ENCODE measurements at regions of chr22 and their contacts with region 1.

Region 1: DNA sequence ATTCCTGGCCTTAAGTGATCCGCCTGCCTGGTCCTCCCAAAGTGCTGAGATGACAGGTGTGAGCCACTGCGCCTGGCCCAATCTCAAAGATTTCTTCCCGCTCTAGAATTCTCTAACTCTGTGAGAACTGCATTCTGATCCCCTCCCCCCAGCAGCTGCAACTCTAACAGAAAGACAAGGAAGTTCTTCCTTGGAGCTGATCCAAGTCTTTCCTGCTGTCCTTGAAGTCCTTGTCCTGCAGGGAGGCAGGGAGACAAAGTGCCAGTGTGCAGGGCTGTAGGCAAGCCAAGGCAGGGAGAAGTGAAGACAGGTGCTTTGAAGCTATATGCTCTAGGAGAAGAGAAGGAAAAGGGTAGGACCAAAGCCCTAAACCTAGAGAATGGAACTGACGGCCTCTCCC is 9.5 kb upstream of the GGA1 start:
- DNase-seq: no peak
- H3K4me3 ChIP-seq: no peak overlapping the region
- H3K27ac ChIP-seq: no peak overlapping the region
- H3K4me1 ChIP-seq: peaks cover 0 to 29% (median 5%) of the 10 kb centered on the region in 3 donors
- H3K27me3 ChIP-seq: peaks cover 0 to 3% (median 0%) of the 10 kb centered on the region in 4 donors
- CTCF ChIP-seq: no peak
- POLR2A ChIP-seq: no peak

Region 2: DNA sequence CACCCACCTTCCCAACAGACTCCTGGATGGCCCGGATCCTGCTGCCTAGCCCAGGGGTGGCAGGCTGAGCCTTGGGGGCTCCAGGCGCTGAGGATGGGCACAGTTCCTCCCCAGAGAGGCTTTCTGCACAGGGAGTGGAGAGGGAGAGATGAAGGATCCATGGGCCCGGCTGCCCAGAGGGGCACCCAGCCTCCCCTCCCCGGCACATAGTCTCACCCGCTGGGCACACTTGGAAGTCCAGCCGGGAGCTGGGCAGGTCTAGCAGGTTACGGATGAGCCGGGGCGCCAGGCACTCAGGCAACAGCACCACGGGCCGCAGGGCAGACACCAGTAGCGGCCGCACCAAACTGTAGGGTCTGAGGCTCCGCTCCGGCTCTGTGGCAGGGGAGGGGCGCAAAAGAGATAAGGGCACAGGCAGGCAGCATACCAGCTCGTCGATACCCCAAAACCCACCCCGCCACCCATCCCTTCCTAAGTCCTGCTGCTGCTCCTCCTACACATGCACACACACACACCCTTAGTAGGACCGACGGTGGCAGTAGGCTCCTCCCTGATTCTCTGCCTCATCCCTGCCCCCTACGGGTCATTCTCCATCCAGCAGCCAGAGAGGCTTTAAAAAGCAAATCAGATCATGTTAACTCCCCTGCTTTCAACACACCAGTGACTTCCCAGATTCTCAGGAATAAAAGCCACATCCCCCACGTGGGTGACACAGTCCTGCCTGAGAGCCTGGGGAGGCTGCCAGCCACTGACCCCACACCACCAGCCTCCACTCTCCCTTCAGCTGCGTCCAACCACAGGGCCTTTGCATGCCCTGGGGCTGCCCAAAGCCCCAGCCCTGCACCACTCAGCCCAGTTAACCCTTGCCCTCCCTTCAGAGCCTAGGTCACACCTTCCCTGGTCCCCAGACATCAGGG is 106.5 kb before region 1 on chr22:
- intact Hi-C with region 1: no loop called
- DNase-seq: no peak
- H3K4me3 ChIP-seq: no peak overlapping the region
- H3K27ac ChIP-seq: no peak overlapping the region
- H3K4me1 ChIP-seq: no peaks in the 10 kb centered on the region
- H3K27me3 ChIP-seq: peaks cover 0 to 4% (median 0%) of the 10 kb centered on the region in 4 donors
- CTCF ChIP-seq: peak in 3 of 6 experiments; percentile 19 to 50 (median 20)
- POLR2A ChIP-seq: no peak

Region 3: DNA sequence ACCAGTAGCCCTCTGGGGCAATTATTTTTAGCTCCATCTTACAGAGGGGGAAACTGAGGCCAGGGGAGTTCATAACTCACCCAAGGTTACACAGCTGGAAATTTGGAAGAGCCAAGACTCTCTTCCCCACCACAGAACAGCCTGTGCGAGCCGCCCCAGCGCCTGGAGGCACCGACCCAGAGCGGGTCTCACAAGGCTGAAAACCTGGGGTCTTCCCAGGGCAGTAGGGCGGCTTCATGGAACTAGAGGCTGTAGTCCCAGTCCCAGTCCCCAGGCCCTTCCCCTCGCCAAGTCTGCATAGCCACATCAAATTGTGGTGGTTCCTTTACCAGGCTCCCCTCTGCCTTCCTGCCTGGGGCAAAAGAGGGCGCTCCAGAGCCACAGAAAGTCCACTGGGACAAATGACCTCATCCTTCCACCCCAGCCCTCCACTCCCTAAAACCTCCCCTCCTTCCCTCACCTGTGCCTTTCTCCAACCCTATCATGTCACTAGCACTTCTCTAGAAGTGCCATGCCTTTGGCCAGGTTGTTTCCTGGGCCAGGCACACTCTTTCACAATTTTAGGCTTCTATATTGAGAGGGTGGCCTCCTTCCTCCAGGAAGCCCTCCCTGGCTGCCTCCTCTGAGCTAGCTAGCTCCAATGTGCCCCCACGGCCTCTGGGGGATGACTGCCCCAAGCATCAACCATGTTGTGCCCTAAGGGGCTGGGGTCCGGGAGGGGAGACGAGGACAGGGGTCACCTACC is 54.0 kb before region 1 on chr22:
- intact Hi-C with region 1: loop called (anchors 10 kb)
- DNase-seq: no peak
- H3K4me3 ChIP-seq: peak overlapping the region in 3 of 4 donors; percentile 29 to 55 (median 40)
- H3K27ac ChIP-seq: peak overlapping the region; percentile 85 to 97 (median 92)
- H3K4me1 ChIP-seq: peaks cover 35 to 95% (median 59%) of the 10 kb centered on the region in 3 donors
- H3K27me3 ChIP-seq: no peaks in the 10 kb centered on the region
- CTCF ChIP-seq: peak; percentile 37 to 75 (median 59)
- POLR2A ChIP-seq: no peak

Measured in esophagus squamous epithelium (tissue), 5 donors.